Breast epithelium (tissue), 4 donors: ENCODE measurements at regions of chr5 and their contacts with region 1.

Region 1: GRCh38 chr5:108118813-108119514 is 262.9 kb downstream of the FBXL17 start:
- DNase-seq: no peak
- H3K4me3 ChIP-seq: no peak overlapping the region
- H3K27ac ChIP-seq: no peak overlapping the region
- H3K4me1 ChIP-seq: no peaks in the 10 kb centered on the region
- H3K27me3 ChIP-seq: no peaks in the 10 kb centered on the region
- CTCF ChIP-seq: no peak
- POLR2A ChIP-seq: no peak

Region 2: DNA sequence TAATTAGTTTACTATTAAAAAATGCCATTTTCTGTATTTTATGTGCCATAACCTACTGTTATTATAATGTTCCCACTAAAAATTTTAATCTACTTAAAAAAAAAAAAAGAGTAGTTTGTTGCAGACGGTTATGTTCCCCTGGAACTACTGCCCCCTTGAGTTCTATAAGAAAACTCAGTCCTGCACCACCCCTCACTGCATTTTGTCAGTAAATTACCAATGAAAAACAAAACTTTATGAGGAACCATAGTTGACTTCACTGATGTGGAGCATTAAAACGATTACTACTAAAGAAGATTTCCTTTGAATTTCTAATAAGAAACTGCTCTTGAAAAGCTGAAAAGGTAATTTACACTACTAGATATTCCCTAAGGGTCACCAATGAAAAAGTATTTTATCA is 25.8 kb before region 1 on chr5:
- intact Hi-C with region 1: no loop called
- DNase-seq: no peak
- H3K4me3 ChIP-seq: no peak overlapping the region
- H3K27ac ChIP-seq: no peak overlapping the region
- H3K4me1 ChIP-seq: no peaks in the 10 kb centered on the region
- H3K27me3 ChIP-seq: no peaks in the 10 kb centered on the region
- CTCF ChIP-seq: no peak
- POLR2A ChIP-seq: no peak

Region 3: GRCh38 chr5:108143581-108143980 is 24.6 kb after region 1 on chr5:
- intact Hi-C with region 1: no loop called
- DNase-seq: no peak
- H3K4me3 ChIP-seq: no peak overlapping the region
- H3K27ac ChIP-seq: no peak overlapping the region
- H3K4me1 ChIP-seq: no peaks in the 10 kb centered on the region
- H3K27me3 ChIP-seq: no peaks in the 10 kb centered on the region
- CTCF ChIP-seq: no peak
- POLR2A ChIP-seq: no peak

Region 4: DNA sequence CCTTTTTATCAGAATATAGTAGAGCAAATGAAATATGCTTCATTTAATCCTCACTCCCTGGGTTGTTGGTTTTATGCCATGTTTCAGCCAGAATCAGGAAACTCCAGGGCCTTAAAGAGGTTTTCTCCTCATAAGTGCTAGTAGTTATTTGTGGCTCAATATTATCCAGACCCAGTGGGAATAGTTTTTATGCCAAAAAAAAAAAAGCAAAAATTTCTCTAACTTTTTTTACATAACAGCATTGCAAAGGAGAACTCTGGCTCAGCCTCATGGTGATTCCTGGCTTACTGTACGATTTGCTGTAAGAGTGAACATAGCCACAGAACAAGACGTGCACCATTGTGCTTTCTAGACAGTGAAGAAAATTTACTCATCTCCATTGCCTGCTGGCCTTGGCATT is 1058.3 kb after region 1 on chr5:
- intact Hi-C with region 1: loop called (anchors 10 kb)
- DNase-seq: no peak
- H3K4me3 ChIP-seq: no peak overlapping the region
- H3K27ac ChIP-seq: no peak overlapping the region
- H3K4me1 ChIP-seq: no peaks in the 10 kb centered on the region
- H3K27me3 ChIP-seq: no peaks in the 10 kb centered on the region
- CTCF ChIP-seq: no peak
- POLR2A ChIP-seq: no peak